ENCODE measurements at regions of chr11 and their contacts with region 1.

Region 1: DNA sequence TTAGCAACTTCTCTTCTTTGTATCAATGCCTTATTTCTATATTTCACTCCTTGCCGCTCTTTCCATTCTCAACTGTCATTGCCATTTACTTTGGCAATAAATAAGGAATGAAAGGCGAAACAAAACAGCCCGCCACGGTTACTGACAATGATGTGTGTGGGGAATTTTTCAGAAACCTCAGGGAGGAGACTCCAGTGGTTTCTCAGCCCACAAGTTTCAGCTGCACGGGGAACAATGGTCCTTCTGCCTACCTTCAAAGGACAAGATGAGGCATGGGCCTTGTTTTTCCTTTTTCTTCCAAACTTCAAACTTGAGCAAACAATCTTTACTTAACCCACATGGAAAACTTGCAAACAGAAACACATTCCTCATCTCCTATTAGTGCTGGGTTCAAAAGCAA is 409.4 kb downstream of the METTL15 start:
- DNase-seq: no peak
- H3K4me3 ChIP-seq: no peak overlapping the region
- H3K27ac ChIP-seq: no peak overlapping the region
- H3K4me1 ChIP-seq: no peaks in the 10 kb centered on the region
- H3K27me3 ChIP-seq: no peaks in the 10 kb centered on the region
- CTCF ChIP-seq: no peak
- EP300 ChIP-seq: no peak
- POLR2A ChIP-seq: no peak
- RAD21 ChIP-seq: no peak

Region 2: DNA sequence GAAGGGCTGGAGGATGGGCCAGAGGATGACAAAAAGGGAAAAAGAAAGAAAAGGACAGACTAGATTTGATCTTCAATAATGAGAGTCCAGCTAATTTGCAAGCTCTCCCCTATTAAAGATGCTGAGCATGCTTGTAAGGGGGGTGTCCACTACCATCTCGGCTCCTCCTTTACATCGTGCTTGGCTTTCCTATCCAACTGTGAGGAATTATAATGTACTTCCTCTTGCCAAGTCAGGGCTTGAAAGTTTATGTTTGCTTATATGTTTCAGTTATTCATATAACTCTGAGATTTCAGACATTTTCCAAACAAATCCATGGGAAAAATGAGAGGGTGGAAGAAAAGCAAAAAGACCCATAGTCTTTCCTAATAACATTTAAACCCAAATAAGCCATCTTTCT is 22.3 kb before region 1 on chr11:
- CTCF ChIA-PET with region 1: no interaction called
- POLR2A ChIA-PET with region 1: no interaction called
- DNase-seq: no peak
- H3K4me3 ChIP-seq: no peak overlapping the region
- H3K27ac ChIP-seq: no peak overlapping the region
- H3K4me1 ChIP-seq: no peaks in the 10 kb centered on the region
- H3K27me3 ChIP-seq: no peaks in the 10 kb centered on the region
- CTCF ChIP-seq: no peak
- EP300 ChIP-seq: no peak
- POLR2A ChIP-seq: no peak
- RAD21 ChIP-seq: no peak

Region 3: GRCh38 chr11:28529540-28530410 is 12.2 kb after region 1 on chr11:
- CTCF ChIA-PET with region 1: interaction called, 16 read pairs
- POLR2A ChIA-PET with region 1: no interaction called
- DNase-seq: no peak
- H3K4me3 ChIP-seq: no peak overlapping the region
- H3K27ac ChIP-seq: no peak overlapping the region
- H3K4me1 ChIP-seq: no peaks in the 10 kb centered on the region
- H3K27me3 ChIP-seq: no peaks in the 10 kb centered on the region
- CTCF ChIP-seq: peak in 1 of 3 experiments; percentile 35; a peak in 2 of 4 replicates
- EP300 ChIP-seq: no peak
- POLR2A ChIP-seq: no peak
- RAD21 ChIP-seq: peak; percentile 52 to 62

Measured in H1 (cell line).